ENCODE measurements at regions of chr6 and their contacts with region 1.

Region 1: GRCh38 chr6:16128759-16129622 is at the start of gene MYLIP:
- DNase-seq: peak; percentile 98 to 99
- ATAC-seq: peak; percentile 97 to 99 (median 98)
- H3K4me3 ChIP-seq: peak within 1 kb of the TSS; percentile 81 to 100 (median 98)
- H3K27ac ChIP-seq: peak within 1 kb of the TSS; percentile 94 to 99 (median 98)
- H3K4me1 ChIP-seq: peaks cover 0 to 53% (median 37%) of the 10 kb centered on the region in 9 donors
- H3K27me3 ChIP-seq: no peaks in the 10 kb centered on the region
- CTCF ChIP-seq: peak; percentile 53 to 90 (median 69)
- total RNA-seq, gene MYLIP: 6.9 to 22.5 (median 14.9) TPM

Region 2: GRCh38 chr6:15399641-15400470 is 729.1 kb before region 1 on chr6:
- intact Hi-C with region 1: no loop called
- DNase-seq: peak; percentile 67 to 90
- ATAC-seq: peak; percentile 82 to 93 (median 88)
- H3K4me3 ChIP-seq: peak overlapping the region; percentile 5 to 53 (median 46)
- H3K27ac ChIP-seq: peak overlapping the region; percentile 11 to 79 (median 64)
- H3K4me1 ChIP-seq: peaks cover 5 to 77% (median 69%) of the 10 kb centered on the region in 9 donors
- H3K27me3 ChIP-seq: no peaks in the 10 kb centered on the region
- CTCF ChIP-seq: no peak

Region 3: DNA sequence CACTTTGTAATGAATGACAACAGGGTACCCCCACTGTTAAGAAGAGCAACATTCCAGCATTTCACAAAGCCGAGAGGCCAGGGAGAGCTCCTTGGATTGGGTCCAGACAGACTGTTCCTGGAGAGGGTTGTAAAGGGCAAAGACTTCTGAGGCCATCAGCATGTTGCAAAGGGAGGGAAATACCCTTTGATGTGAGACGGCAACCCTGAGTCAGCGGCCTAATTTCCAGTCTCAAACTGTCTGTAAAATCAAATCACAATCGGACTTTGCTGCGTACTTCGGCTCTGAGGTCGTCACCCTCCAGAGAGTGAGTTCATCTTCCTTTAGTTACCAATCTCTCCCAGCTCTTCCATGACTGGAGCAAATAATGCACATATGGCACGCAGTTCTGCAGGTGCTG is 365.2 kb before region 1 on chr6:
- intact Hi-C with region 1: loop called in 1 of 10 experiments (anchors 10 kb)
- DNase-seq: peak in 1 of 2 donors; percentile 6
- ATAC-seq: peak in 5 of 8 donors; percentile 22 to 88 (median 47)
- H3K4me3 ChIP-seq: no peak overlapping the region
- H3K27ac ChIP-seq: no peak overlapping the region
- H3K4me1 ChIP-seq: peaks cover 0 to 12% (median 6%) of the 10 kb centered on the region in 9 donors
- H3K27me3 ChIP-seq: no peaks in the 10 kb centered on the region
- CTCF ChIP-seq: no peak

Region 4: GRCh38 chr6:15922510-15923250 is 206.3 kb before region 1 on chr6:
- intact Hi-C with region 1: loop called in 1 of 10 experiments (anchors 10 kb)
- DNase-seq: no peak
- ATAC-seq: peak in 1 of 8 donors; percentile 35
- H3K4me3 ChIP-seq: no peak overlapping the region
- H3K27ac ChIP-seq: no peak overlapping the region
- H3K4me1 ChIP-seq: no peaks in the 10 kb centered on the region
- H3K27me3 ChIP-seq: no peaks in the 10 kb centered on the region
- CTCF ChIP-seq: no peak

Region 5: GRCh38 chr6:15996030-15996429 is 133.0 kb before region 1 on chr6:
- intact Hi-C with region 1: loop called in 2 of 10 experiments (anchors 5 to 10 kb)
- DNase-seq: no peak
- ATAC-seq: no peak
- H3K4me3 ChIP-seq: no peak overlapping the region
- H3K27ac ChIP-seq: peak overlapping the region in 8 of 10 donors; percentile 31 to 78 (median 55)
- H3K4me1 ChIP-seq: peaks cover 0 to 39% (median 10%) of the 10 kb centered on the region in 9 donors
- H3K27me3 ChIP-seq: peaks cover 0 to 4% (median 0%) of the 10 kb centered on the region in 7 donors
- CTCF ChIP-seq: no peak

Region 6: DNA sequence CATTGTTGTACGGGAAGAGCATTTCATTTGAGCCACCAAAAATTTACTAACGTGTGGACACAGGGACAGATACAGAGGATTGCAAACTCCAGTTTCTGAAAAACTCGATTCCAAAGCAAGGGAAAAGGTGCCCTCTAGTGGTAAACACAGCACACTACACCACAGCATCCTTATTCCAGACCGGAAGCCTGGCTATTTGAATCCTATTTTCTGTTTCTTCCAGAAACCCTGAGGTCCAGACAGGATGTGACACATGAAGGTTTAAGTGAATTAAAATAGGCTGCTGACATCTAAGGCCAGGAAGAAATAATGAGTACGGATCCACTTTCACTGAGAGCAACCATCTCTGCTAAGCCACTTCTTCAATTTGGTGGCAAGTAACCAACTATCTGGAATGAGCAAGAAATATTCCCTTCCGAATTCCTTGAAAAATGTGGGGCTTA is 77.6 kb after region 1 on chr6:
- intact Hi-C with region 1: loop called in 2 of 10 experiments (anchors 5 kb)
- DNase-seq: peak in 1 of 2 donors; percentile 75
- ATAC-seq: peak; percentile 52 to 94 (median 80)
- H3K4me3 ChIP-seq: no peak overlapping the region
- H3K27ac ChIP-seq: peak overlapping the region in 2 of 10 donors; percentile 17 to 64
- H3K4me1 ChIP-seq: peaks cover 0 to 16% (median 8%) of the 10 kb centered on the region in 9 donors
- H3K27me3 ChIP-seq: peaks cover 0 to 7% (median 0%) of the 10 kb centered on the region in 7 donors
- CTCF ChIP-seq: peak; percentile 86 to 99 (median 97)